ENCODE measurements at regions of chr17 and their contacts with region 1.

Region 1: DNA sequence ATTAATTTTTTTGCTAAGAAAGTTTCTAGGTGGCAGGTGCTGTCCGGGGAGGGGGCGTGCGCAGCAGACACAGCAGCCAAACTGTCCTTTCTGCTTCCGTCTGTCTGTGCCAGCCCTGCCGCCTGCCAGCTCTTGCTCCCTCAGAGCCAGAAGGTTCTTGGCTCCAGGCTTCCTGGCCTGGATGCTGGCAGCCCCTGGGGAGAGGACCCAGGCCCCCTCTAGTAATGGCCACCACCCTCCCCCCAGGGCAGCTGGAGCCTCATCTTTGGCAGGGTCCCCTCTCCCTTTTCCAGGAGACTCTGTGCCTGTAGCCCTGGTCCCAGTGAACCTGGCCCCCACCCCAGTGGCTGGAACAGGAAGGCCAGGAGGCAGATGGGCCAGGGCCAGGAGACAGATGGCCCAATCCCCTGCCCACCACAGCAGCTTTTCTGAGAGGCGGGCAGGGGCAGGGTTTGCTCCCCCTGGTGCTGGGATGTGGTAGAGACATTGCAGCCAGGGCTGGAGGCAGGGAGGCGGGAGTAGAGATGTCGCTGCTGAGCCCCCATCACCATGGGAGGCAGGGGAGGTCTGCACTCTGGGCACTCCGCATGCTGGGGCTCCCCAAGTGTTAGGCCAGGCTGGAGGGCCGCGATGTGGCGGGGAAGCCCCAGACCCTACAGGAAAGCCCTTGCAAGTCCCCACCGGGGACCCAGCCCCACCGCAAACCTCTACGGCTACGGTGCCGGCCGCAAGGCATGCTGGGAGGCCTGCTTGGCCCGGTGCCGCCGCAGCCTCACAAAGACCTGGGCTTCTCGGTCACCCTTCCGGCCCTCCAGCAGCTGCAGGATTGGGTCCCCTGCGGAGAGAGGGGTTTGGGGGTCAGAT is 16.7 kb downstream of the UNC13D start:
- DNase-seq: peak; percentile 89
- CTCF ChIP-seq: peak; percentile 72

Region 2: GRCh38 chr17:75779231-75779986 is 48.1 kb before region 1 on chr17:
- CTCF ChIA-PET with region 1: interaction called, 35 read pairs
- POLR2A ChIA-PET with region 1: interaction called, 13 read pairs
- DNase-seq: peak; percentile 94
- CTCF ChIP-seq: no peak

Region 3: GRCh38 chr17:75791254-75791653 is 36.2 kb before region 1 on chr17:
- CTCF ChIA-PET with region 1: interaction called, 35 read pairs
- POLR2A ChIA-PET with region 1: no interaction called
- DNase-seq: no peak
- CTCF ChIP-seq: no peak

Region 4: GRCh38 chr17:75808905-75809715 is 18.4 kb before region 1 on chr17:
- CTCF ChIA-PET with region 1: interaction called, 56 read pairs
- POLR2A ChIA-PET with region 1: interaction called, 3 read pairs
- DNase-seq: peak; percentile 80
- CTCF ChIP-seq: no peak

Region 5: GRCh38 chr17:75845049-75845860 is 17.8 kb after region 1 on chr17:
- CTCF ChIA-PET with region 1: interaction called, 135 read pairs
- POLR2A ChIA-PET with region 1: interaction called, 3 read pairs
- DNase-seq: peak; percentile 91
- CTCF ChIP-seq: peak; percentile 69

Region 6: DNA sequence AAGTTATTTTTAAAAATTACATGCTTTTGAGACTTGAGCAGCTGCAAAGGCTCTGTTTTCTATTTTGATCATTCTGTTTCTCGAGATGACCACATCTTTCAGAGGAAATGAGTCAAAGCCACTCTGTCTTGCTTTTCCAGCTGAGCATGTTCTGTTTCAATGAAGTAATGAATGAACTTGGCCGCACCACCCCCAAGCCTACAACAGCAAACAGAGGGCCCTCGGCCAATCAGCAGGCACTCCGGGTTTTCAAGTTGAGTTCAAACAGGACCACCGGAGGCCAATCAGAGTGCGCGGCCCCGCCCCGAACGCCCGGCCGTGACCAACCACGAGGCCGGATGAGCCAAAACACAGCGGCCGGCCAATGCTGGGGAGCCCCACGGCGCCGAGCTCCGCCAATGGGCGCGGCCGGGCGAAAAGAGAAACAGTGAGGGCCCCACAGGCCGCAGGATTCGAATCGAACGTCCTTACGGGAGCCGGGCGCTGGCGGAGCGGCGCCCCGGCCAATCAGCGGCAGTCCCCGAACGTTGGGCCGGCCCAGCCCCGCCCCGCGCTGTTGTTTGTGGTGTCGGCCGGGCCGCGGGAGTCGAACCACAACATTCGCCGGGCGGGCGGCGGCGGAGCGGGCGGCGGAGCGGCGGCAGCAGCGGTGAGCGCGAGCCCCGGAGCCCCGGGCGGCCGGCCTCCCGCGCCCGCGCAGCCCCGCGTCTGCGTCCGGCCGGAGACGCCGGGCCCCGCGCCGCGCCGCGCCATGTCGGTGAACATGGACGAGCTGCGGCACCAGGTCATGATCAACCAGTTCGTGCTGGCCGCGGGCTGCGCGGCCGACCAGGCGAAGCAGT is 437.5 kb after region 1 on chr17 and contains the start of gene UBALD2:
- CTCF ChIA-PET with region 1: no interaction called
- POLR2A ChIA-PET with region 1: interaction called, 12 read pairs
- DNase-seq: peak; percentile 93
- CTCF ChIP-seq: no peak

Measured in GM10248 (cell line).